Dorsolateral prefrontal cortex (tissue), 120 donors: ENCODE measurements at regions of chrX and their contacts with region 1.

Region 1: GRCh38 chrX:49199906-49200771 is at the start of gene SYP:
- DNase-seq: peak; percentile 81 to 92 (median 86)
- H3K4me3 ChIP-seq: peak within 1 kb of the TSS; percentile 36 to 78 (median 65)
- H3K27ac ChIP-seq: peak within 1 kb of the TSS; percentile 66 to 96 (median 89)
- H3K27me3 ChIP-seq: peaks cover 0 to 34% (median 0%) of the 10 kb centered on the region in 45 donors
- CTCF ChIP-seq: peak in 11 of 56 donors; percentile 11 to 52 (median 18)
- total RNA-seq, gene SYP: 150 to 795 (median 493) TPM

Region 2: DNA sequence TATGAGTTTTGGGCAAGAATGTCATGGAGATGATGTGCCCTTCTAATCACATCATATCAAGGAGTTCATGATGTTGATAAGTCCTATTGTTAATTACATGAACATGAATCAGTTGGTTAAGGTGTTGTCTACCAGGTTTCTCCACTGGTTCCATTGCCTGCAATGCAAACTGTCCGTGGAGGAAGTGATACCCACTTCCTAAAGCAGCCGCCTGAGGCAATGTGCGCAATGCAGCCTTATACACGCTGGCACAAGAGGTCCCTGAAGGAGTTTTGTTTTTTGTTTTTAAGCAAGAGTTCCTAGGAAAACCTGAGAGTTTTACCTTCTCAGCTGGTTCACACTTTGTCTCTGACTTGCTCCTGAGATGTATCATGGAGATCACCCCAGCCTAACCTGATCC is 70.7 kb before region 1 on chrX:
- intact Hi-C with region 1: no loop called
- DNase-seq: no peak
- H3K4me3 ChIP-seq: no peak overlapping the region
- H3K27ac ChIP-seq: no peak overlapping the region
- H3K27me3 ChIP-seq: peaks cover 0 to 17% (median 0%) of the 10 kb centered on the region in 45 donors
- CTCF ChIP-seq: no peak

Region 3: DNA sequence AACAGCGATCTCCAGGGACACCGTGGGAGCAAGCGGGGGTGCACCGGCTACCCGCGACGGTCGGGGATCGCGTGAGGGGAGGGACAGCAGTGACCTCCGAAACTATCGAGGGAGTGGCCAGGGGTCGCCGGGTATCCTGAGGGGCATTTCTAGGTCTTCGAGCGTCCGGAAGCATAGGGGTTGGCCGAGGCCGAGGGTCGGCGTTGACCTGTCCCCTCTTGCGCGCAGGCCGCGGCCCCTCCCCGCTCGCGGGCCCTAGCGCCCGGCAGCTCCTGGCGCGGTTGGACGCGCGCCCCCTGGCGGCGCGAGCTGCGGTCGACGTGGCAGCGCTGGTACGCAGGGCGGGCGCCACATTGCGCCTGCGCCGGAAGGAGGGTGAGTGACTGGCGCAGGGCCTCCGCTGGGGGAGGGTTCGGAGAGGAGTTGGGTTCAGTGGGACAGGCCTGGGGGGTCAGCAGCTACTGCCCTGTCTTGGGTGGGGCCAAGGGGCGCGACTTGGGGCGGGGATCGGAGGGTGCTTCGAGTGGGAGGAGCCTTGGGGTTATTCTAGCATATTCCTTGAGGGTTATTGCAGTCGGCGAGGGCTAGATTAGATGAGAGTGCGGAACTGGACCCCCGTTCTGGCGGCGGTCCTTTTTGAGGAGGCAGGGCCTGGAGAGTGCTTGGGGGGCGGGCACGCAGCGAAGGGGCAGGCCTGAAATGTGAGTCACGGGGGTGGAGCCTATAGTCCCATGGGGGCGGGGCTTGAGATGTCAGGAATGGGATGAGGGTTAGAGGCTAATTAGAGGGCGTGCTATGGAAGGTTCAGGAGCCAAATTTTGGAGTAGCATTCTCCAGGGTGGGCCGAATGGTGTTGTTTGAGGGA is 36.4 kb before region 1 on chrX:
- intact Hi-C with region 1: loop called in 1 of 2 experiments (anchors 5 kb)
- DNase-seq: peak; percentile 71 to 88 (median 84)
- H3K4me3 ChIP-seq: peak overlapping the region; percentile 13 to 67 (median 53)
- H3K27ac ChIP-seq: peak overlapping the region; percentile 58 to 97 (median 94)
- H3K27me3 ChIP-seq: peaks cover 0 to 45% (median 0%) of the 10 kb centered on the region in 45 donors
- CTCF ChIP-seq: peak in 55 of 56 donors; percentile 38 to 89 (median 71)

Region 4: DNA sequence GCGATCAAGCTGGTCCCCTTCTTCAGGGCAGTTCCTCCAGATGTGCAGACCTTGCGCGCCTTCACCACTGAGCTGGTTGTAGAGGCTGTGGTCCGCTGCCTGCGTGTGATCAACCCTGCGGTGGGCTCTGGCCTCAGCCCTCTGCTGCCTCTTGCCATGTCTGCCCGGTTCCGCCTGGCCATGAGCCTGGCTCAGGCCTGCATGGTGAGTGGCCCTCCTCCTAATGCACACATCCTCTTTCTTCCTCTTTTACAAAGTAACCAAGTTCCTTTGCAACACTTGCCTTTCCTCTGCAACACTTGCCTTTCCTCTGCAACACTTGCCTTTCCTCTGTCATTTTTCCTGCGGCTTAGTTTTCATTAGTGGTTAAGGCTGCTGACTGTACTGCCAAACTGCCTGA is 36.9 kb after region 1 on chrX:
- intact Hi-C with region 1: loop called in 1 of 2 experiments (anchors 5 kb)
- DNase-seq: no peak
- H3K4me3 ChIP-seq: no peak overlapping the region
- H3K27ac ChIP-seq: no peak overlapping the region
- H3K27me3 ChIP-seq: peaks cover 0 to 28% (median 2%) of the 10 kb centered on the region in 45 donors
- CTCF ChIP-seq: no peak

Region 5: DNA sequence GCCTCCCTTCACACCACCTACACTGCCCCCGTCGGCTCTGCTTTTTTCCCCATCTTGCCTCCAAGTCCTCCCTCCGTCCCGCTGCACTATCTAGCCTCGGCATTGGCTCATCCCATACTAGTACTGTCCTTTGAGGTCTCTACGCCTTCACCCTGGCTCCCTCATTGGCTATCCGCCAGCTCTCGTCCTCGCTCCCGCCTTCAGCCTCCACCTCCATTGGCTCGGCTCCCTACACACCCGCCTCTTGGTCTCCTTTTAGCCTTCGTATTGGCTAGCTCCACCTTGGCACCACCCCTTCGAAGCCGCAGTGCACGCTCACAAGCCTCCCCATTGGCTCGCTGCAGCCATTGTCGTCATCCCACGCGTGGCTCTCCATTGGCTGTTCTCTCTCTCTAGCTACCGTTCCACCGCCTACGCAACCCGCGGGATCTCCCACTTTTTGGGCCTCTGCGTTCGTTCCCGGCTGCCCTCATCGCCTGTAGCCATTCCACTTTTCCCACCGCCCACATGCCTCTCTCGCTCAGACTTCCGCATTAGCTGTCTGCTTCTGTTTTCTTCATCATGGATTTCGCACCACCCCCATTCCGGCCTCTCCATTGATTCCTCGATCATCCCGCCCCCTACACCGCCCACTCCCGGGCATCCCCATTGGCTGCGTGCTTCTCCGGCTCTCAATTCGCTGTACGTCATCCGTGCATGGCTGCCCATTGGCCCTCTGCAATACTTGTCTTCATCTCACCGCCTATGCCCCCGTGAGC is 69.0 kb after region 1 on chrX:
- intact Hi-C with region 1: loop called in 1 of 2 experiments (anchors 2 kb)
- DNase-seq: peak; percentile 90 to 98 (median 97)
- H3K4me3 ChIP-seq: peak overlapping the region; percentile 44 to 83 (median 69)
- H3K27ac ChIP-seq: peak overlapping the region; percentile 67 to 98 (median 94)
- H3K27me3 ChIP-seq: peaks cover 0 to 28% (median 0%) of the 10 kb centered on the region in 45 donors
- CTCF ChIP-seq: no peak